Activated naive CD4-positive, alpha-beta T cell treated with anti-CD3 and anti-CD28 coated beads, Interleukin-2, amount 10 ng/mL, durations not matched to agents 7 days and 5 days (primary cell): ENCODE measurements at regions of chr15 and their contacts with region 1.

Region 1: DNA sequence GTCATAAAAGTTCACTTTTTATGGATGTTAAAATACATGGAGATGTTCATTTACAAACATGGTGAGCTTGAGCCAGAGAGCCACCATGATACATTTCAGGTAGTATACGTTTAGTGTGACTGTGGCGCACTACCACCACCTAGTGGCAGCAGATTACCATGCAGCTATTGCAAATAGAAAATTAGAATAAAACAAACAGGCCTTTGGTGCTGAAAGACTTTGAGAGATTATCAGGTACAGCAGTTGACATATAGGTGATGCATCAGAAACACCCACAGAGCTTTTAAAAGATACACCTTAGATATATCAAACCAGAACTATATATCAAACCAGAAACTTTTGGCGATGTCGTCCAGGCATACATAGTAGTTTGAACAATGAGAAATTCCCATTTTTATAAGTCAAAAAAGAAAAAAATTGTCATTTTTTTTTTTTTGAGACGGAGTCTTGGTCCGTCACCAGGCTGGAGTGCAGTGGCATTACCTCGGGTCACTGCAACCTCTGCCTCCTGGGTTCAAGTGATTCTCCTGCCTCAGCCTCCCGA is 42.0 kb upstream of the ICE2 start:
- DNase-seq: peak; percentile 87
- H3K4me3 Mint-ChIP-seq: no peak overlapping the region
- H3K27ac Mint-ChIP-seq: peak overlapping the region; percentile 2
- H3K4me1 Mint-ChIP-seq: peaks cover 30% of the 10 kb centered on the region
- H3K27me3 Mint-ChIP-seq: no peaks in the 10 kb centered on the region

Region 2: DNA sequence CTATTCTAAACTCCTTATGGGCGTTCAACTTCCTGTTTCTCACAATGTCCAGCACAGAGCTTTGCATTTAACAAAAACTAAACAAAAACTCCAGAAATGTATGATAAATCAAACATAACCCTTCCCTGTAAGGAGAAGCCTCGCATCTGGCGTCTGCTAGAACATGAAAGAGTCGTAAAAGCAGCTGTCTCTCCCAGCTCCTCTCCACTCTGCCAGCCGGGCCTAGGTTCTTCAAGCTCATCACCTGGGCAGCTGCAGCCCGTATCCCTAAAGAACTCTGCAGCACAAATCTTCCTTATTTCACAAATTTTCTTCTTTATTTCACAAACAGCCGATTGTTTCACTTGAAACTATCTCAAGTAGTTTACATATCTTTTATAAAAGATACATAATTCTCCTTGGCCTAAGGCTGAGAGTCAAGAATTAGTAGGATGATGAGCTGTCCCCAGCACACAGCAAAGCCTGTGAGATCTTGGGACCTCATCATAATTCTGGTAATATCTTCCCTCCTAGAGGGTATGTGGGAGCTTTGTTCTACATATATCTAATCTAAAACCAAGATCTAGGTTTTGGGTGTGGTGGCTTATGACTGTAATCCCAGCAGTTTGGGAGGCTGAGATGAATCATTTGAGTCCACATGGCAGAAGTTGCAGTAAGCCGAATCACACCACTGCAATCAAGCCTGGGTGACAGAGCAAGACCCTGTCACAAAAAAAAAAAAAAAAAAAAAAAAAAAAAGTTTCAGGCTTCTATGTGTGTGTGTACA is 158.4 kb before region 1 on chr15:
- CTCF ChIA-PET with region 1: interaction called, 20 read pairs
- DNase-seq: peak; percentile 48
- H3K4me3 Mint-ChIP-seq: no peak overlapping the region
- H3K27ac Mint-ChIP-seq: peak overlapping the region; percentile 80
- H3K4me1 Mint-ChIP-seq: peaks cover 33% of the 10 kb centered on the region
- H3K27me3 Mint-ChIP-seq: no peaks in the 10 kb centered on the region

Region 3: GRCh38 chr15:60507596-60508424 is 13.1 kb before region 1 on chr15:
- CTCF ChIA-PET with region 1: interaction called, 54 read pairs
- DNase-seq: peak; percentile 64
- H3K4me3 Mint-ChIP-seq: no peak overlapping the region
- H3K27ac Mint-ChIP-seq: peak overlapping the region; percentile 84
- H3K4me1 Mint-ChIP-seq: peaks cover 41% of the 10 kb centered on the region
- H3K27me3 Mint-ChIP-seq: no peaks in the 10 kb centered on the region

Region 4: GRCh38 chr15:60536951-60537350 is 16.1 kb after region 1 on chr15:
- CTCF ChIA-PET with region 1: interaction called, 26 read pairs
- DNase-seq: no peak
- H3K4me3 Mint-ChIP-seq: no peak overlapping the region
- H3K27ac Mint-ChIP-seq: no peak overlapping the region
- H3K4me1 Mint-ChIP-seq: peaks cover 48% of the 10 kb centered on the region
- H3K27me3 Mint-ChIP-seq: no peaks in the 10 kb centered on the region

Region 5: GRCh38 chr15:60551781-60552161 is 30.9 kb after region 1 on chr15:
- CTCF ChIA-PET with region 1: interaction called, 46 read pairs
- DNase-seq: no peak
- H3K4me3 Mint-ChIP-seq: no peak overlapping the region
- H3K27ac Mint-ChIP-seq: peak overlapping the region; percentile 85
- H3K4me1 Mint-ChIP-seq: peaks cover 85% of the 10 kb centered on the region
- H3K27me3 Mint-ChIP-seq: no peaks in the 10 kb centered on the region

Region 6: DNA sequence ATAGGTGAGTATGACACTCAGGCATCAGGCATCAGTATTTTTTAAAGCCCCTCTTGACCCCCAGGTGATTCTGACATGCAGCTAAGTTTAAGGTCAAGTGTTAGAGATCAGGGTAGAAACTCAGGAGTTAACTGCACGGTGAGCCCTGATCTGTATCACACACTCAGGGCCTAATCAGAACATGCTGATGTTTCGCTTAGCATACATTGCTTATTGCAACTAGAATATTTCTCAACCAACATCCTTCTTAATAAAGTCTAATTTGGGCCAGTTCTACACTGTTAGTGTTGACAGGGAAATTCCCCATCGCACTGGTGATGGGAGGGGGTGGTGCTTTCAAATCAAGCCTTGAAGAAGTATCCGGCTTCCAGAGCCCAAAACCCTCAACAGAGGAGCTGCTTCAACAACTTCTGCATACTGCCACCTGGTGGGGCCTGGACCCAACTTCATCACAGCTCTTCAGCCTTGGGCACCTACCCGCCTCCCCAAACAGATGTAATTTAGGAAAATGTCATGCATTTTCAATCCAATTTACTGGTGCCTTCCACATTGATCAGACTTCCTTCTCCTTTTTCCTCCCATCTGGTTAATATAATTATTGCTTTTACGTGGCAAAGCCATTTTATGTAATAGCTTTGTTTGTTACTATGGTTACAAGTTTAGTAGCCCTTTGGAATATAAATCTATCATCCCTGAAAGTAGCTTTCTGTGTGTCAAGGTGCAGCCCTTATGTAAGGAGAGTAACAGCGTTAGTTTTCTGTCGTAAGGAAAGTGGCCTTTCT is 396.0 kb after region 1 on chr15:
- CTCF ChIA-PET with region 1: interaction called, 19 read pairs
- DNase-seq: peak; percentile 91
- H3K4me3 Mint-ChIP-seq: no peak overlapping the region
- H3K27ac Mint-ChIP-seq: no peak overlapping the region
- H3K4me1 Mint-ChIP-seq: peaks cover 16% of the 10 kb centered on the region
- H3K27me3 Mint-ChIP-seq: peaks cover 5% of the 10 kb centered on the region

Region 7: DNA sequence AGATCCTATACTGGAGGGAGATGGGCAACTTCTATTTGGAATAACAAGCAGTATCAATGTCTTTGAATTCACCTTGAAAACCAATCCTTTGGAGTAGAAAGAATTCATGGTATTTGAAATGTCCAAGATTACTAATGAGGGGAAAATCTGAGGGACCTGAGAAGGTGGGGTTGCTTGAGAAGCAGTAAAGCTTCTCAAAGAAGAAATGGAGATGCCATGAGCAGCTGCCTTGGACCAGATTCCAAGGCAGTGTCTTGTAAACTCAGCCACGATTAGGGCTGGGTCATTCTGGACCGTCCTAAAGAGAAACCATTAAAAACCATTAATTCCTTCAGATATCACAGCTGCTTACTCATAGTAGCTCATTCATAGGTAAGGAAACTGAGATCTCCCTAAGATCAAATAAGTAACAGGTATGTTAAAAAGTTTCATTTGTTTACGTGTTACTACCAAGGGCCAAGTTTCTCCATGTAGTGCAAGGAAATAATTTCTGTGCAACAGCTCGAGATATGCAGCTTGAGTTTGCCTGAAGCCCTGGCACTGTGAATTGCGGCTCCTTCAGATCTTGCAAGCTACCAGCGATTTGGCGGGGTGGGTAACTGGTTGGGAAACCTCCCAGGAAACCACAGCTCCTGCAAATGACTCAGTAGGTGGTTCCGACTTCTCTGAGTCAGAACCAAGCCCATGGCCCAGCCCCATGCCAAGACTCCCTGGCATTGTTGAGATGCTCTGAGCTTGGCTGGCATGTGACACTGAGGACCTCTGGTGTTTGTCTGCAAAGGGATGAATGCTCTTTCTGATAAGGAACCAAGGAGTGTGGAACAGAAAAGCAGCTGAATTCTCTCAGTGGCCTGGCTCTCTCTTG is 411.4 kb after region 1 on chr15:
- CTCF ChIA-PET with region 1: interaction called, 10 read pairs
- DNase-seq: peak; percentile 54
- H3K4me3 Mint-ChIP-seq: no peak overlapping the region
- H3K27ac Mint-ChIP-seq: no peak overlapping the region
- H3K4me1 Mint-ChIP-seq: peaks cover 12% of the 10 kb centered on the region
- H3K27me3 Mint-ChIP-seq: peaks cover 46% of the 10 kb centered on the region